ENCODE measurements at regions of chr17 and their contacts with region 1.

Region 1: DNA sequence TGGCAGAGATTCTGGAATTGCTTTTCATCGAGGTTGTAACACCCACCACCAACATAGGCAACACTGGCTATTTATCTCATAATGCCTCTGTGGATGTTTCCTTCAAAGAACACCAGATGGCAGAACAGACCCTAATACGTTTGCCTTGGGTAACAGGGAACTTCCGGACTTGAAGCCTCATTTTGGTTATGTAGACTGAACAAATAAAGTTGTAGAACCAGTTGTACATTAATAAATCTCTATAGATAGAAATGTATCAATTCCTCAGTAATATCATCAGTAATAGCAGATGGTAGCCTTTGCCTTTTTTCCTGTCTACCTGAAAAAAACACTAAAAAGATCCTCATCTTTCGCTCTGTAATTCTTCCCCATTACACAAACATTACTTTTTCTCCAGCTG is 25.9 kb upstream of the APOH start:
- DNase-seq: no peak
- ATAC-seq: peak in 3 of 4 donors; percentile 66 to 89 (median 71)
- H3K4me3 ChIP-seq: no peak overlapping the region
- H3K27ac ChIP-seq: no peak overlapping the region
- H3K4me1 ChIP-seq: no peaks in the 10 kb centered on the region
- H3K27me3 ChIP-seq: no peaks in the 10 kb centered on the region
- CTCF ChIP-seq: peak; percentile 60

Region 2: DNA sequence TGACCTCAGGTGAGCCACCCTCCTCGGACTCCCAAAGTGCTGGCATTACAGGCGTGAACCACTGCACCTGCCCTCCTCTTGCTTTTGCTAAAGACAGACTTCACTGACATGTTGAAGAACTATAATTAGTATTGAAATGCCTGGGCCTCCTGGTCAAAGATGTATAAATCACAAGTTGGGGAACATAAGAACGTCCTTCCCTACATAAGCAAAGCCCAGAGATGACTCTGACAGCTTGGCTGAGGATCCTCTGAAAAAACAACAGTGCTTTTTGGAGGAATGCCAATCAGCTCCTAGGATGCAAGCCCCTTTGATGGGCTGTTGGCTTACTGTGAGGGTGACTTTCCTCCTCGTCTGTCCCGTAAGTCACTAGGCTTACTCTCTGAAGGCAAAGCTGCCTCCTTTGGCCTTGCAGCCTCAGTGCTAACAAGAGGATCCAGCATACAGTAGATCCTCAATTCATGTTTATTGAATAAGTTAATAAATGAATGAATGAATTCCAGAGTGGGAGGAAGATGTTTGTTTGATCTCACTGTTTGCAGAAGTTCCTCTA is 32.2 kb before region 1 on chr17:
- intact Hi-C with region 1: no loop called
- DNase-seq: no peak
- ATAC-seq: no peak
- H3K4me3 ChIP-seq: no peak overlapping the region
- H3K27ac ChIP-seq: no peak overlapping the region
- H3K4me1 ChIP-seq: no peaks in the 10 kb centered on the region
- H3K27me3 ChIP-seq: peaks cover 0 to 10% (median 3%) of the 10 kb centered on the region in 3 donors
- CTCF ChIP-seq: no peak

Region 3: DNA sequence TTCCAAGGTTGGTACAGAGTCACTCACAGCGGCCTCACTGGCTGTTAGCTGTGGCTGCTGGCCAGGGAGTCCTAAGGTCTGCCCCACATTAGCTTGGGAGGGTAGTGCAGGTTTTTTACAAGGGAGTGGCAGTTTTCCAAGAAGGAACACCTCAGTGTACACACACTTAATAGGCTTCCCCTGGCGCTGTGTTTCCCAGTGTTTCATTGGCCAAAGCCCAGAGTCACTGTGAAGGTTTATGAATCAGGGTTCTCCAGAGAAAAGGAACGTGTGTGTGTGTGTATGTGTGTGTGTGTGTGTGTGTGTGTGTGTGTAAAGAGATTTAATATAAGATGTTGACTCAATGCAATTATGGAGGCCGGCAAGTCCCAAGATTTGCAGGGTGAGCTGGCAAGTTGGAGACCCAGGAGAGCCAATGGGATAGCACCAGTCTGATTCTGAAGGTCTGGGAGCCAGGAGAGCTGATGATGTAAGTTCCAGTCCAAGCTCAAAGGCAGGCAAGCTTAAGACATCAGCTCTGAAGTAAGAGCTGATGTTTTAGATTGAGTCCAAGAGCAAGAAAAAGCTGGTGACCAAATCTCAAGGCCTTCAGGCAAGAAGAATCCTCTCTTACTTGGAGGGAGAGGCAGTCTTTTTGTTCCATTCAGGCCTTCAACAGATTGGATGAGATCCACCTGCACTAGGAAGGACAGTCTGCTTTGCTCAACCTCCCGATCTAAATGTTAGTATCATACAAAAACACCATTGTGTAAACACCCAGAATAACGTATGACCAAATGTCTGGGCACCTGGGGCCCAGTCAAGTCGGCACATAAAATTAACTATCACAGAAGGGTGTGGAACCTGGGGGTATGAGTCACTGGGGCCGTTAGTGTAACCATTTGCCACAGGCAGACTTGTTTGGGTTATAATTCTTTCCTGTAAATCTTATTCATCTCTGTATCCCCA is 254.1 kb after region 1 on chr17:
- intact Hi-C with region 1: no loop called
- DNase-seq: no peak
- ATAC-seq: peak; percentile 35 to 91 (median 72)
- H3K4me3 ChIP-seq: no peak overlapping the region
- H3K27ac ChIP-seq: peak overlapping the region; percentile 59
- H3K4me1 ChIP-seq: peaks cover 13% of the 10 kb centered on the region
- H3K27me3 ChIP-seq: no peaks in the 10 kb centered on the region
- CTCF ChIP-seq: no peak

Region 4: DNA sequence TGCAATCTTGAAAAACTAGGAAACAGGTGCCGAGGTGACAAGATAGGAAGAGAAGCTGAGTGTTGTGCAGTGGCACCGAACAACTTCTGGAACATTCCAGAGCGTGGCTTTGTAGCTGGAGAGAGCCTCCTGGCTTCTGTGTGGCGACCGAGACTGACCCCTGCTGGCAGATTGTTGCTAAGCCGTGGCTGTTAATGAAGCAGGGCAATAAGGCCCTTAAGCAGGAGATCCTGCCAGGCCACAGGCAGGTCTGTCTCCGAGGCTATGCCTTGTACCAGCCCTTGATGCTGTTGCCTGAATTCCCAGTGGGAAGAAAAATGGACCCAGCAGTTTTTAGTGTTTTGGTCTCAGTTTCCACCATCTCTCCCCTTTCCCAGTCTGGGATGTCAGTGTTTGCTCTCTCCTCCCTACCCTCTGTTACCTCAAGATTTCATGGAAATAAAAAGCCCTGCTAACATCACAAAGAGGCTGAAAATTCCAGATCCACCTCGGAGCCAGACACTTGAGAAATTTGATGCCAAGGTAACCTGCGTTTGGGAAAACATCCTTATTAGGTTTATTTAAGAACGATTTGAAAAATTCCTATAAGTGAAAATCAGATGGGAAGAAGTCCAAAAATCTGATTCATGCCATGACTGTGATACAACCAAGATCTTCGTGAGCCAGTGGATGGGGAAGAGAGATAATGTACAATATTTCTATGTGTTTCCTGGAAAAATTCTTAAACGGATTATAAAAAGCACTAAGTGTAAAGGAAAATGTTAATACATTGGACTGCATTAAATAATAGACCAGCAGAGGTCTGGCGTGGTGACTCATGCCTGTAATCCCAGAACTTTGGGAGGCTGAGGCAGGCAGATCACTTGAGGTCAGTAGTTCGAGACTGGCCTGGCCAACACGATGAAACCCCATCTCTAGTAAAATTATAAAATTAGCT is 312.4 kb after region 1 on chr17:
- intact Hi-C with region 1: loop called in 1 of 2 experiments (anchors 1 kb)
- DNase-seq: peak; percentile 72 to 84
- ATAC-seq: peak in 3 of 4 donors; percentile 64 to 85 (median 83)
- H3K4me3 ChIP-seq: no peak overlapping the region
- H3K27ac ChIP-seq: no peak overlapping the region
- H3K4me1 ChIP-seq: no peaks in the 10 kb centered on the region
- H3K27me3 ChIP-seq: no peaks in the 10 kb centered on the region
- CTCF ChIP-seq: peak; percentile 73

Region 5: DNA sequence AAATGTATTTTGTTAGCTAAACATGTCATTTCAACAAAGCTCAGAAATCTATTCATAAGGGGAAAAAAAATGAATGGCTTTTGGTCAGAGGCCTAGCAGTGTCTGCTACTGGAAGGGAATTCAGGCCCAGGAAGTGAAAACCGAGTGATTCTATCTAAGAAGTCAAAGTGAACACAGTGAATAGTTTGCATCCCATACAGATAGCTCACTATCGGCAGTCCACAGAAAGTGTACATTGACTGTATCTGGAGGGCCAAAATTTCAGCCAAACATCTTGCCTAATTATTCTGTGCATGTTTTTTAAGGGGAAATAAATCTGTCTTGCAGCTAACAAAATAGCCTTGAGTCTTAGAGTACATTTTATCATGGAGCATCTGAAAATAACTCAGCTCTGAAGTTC is 365.4 kb after region 1 on chr17:
- intact Hi-C with region 1: loop called in 1 of 2 experiments (anchors 2 kb)
- DNase-seq: no peak
- ATAC-seq: no peak
- H3K4me3 ChIP-seq: no peak overlapping the region
- H3K27ac ChIP-seq: no peak overlapping the region
- H3K4me1 ChIP-seq: no peaks in the 10 kb centered on the region
- H3K27me3 ChIP-seq: no peaks in the 10 kb centered on the region
- CTCF ChIP-seq: no peak

Region 6: GRCh38 chr17:66673668-66674315 is 418.7 kb after region 1 on chr17:
- intact Hi-C with region 1: loop called (anchors 1 to 5 kb)
- DNase-seq: no peak
- ATAC-seq: peak; percentile 40 to 65 (median 58)
- H3K4me3 ChIP-seq: no peak overlapping the region
- H3K27ac ChIP-seq: no peak overlapping the region
- H3K4me1 ChIP-seq: peaks cover 8% of the 10 kb centered on the region
- H3K27me3 ChIP-seq: no peaks in the 10 kb centered on the region
- CTCF ChIP-seq: peak; percentile 69